ENCODE measurements at regions of chr10 and their contacts with region 1.

Region 1: DNA sequence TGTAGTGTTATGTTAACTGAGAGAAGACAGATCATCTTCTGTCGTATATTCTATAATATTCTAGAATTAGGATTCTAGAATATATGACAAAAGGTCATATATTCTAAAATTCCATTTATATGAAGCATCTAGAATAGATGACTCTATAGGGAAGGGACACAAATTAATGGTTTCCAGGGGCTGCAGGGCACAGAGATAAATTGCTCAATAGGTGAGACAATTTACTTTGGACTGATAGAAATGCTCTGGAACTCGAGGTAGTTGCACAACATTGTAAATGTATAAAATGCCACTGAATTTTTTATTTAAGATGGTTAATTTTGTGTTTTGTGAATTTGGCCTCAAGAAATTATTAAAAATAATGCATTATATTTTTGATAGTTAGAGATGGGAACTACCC is 790.8 kb downstream of the GATA3 start:
- DNase-seq: no peak
- H3K4me3 Mint-ChIP-seq: no peak overlapping the region
- H3K27ac Mint-ChIP-seq: no peak overlapping the region
- H3K4me1 Mint-ChIP-seq: no peaks in the 10 kb centered on the region
- H3K27me3 Mint-ChIP-seq: peaks cover 13% of the 10 kb centered on the region

Region 2: DNA sequence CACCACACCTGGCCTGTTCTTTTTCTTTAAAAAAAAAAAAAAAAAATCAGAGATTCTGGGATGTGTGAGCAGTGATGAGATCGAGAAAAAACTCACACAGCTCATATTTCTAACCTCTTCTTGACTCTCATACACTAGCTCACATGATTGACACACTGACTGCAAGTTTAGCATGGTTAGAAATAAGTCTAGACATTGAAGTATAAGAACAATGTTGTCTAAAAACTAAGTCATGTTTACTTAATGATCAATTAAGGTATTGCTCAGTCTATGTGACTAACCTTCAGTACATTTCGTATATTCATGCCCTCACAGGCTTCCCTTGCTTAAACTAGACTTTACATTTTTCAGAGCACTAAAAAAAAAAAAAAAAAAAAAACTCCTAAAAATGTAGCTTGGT is 15.7 kb before region 1 on chr10:
- CTCF ChIA-PET with region 1: no interaction called
- POLR2A ChIA-PET with region 1: no interaction called
- intact Hi-C with region 1: no loop called
- DNase-seq: no peak
- H3K4me3 Mint-ChIP-seq: no peak overlapping the region
- H3K27ac Mint-ChIP-seq: no peak overlapping the region
- H3K4me1 Mint-ChIP-seq: peaks cover 8% of the 10 kb centered on the region
- H3K27me3 Mint-ChIP-seq: peaks cover 5% of the 10 kb centered on the region

Region 3: DNA sequence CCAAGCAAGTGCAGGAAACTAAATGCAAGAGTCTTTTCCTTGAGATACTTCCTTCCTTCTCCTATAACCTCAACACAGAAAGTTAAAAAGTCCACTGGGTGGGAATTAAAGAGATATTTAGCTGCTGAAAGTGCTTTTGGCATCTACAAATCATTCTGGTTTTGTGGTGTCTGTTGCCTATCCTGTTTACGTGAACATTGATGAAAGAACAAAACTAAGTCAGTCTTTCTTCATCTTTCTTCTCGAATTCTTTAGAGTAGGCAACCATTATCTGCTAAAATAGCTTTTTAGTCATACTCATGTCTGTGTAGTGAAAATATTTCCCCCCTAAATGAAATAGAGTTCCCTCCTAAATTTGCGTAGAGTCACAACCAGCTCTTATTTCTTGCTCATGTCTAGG is 47.8 kb after region 1 on chr10:
- CTCF ChIA-PET with region 1: no interaction called
- POLR2A ChIA-PET with region 1: no interaction called
- intact Hi-C with region 1: loop called (anchors 5 kb)
- DNase-seq: no peak
- H3K4me3 Mint-ChIP-seq: no peak overlapping the region
- H3K27ac Mint-ChIP-seq: peak overlapping the region; percentile 4
- H3K4me1 Mint-ChIP-seq: peaks cover 14% of the 10 kb centered on the region
- H3K27me3 Mint-ChIP-seq: peaks cover 9% of the 10 kb centered on the region

Measured in activated CD4-positive, alpha-beta memory T cell treated with anti-CD3 and anti-CD28 coated beads for 36 hours (primary cell).